Right lobe of liver (tissue), 6 donors: ENCODE measurements at regions of chr11 and their contacts with region 1.

Region 1: DNA sequence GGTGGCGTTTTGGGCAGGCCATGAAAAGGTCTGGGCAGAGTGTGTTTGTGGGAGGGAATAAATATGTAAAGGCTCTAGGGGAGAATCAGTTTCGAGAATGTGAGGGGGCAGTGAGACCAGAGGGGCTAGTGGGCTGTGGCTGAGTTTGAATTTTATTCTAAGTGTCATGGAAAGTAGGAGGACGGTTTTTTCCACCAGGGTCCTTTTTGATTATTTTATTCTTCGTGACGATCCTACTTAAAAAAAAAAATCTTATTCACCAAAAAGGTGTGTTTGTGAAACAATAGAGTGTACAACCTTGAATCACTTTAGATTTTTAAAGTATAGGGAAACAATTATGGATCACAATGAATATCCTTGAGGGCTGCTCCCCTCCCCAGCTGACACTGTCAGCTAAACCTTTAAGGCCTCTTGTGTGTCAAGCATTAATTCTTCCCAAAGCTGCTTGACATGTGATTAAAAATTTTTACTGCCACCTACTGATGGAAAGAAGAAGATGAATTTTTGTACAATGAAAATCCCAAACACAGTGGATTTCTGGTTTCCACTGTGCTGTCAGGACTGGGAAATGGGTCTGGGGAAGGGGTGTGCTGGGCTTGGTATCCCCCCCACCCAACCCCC is 107.5 kb upstream of the OR4B1 start:
- DNase-seq: peak in 1 of 3 donors; percentile 23
- ATAC-seq: peak; percentile 58 to 66 (median 62)
- H3K4me3 ChIP-seq: peak overlapping the region in 2 of 3 donors; percentile 8 to 27
- H3K27ac ChIP-seq: peak overlapping the region; percentile 39 to 58 (median 51)
- H3K4me1 ChIP-seq: peaks cover 0 to 60% (median 12%) of the 10 kb centered on the region in 4 donors
- H3K27me3 ChIP-seq: no peaks in the 10 kb centered on the region
- CTCF ChIP-seq: peak; percentile 37 to 44 (median 42)
- POLR2A ChIP-seq: no peak

Region 2: GRCh38 chr11:47886096-47886495 is 223.1 kb before region 1 on chr11:
- intact Hi-C with region 1: no loop called
- DNase-seq: peak in 1 of 3 donors; percentile 19
- ATAC-seq: peak in 2 of 4 donors; percentile 44 to 47
- H3K4me3 ChIP-seq: no peak overlapping the region
- H3K27ac ChIP-seq: no peak overlapping the region
- H3K4me1 ChIP-seq: no peaks in the 10 kb centered on the region
- H3K27me3 ChIP-seq: no peaks in the 10 kb centered on the region
- CTCF ChIP-seq: no peak
- POLR2A ChIP-seq: no peak

Region 3: GRCh38 chr11:47932544-47932943 is 176.6 kb before region 1 on chr11:
- intact Hi-C with region 1: loop called (anchors 5 kb)
- DNase-seq: no peak
- ATAC-seq: no peak
- H3K4me3 ChIP-seq: no peak overlapping the region
- H3K27ac ChIP-seq: no peak overlapping the region
- H3K4me1 ChIP-seq: peaks cover 0 to 4% (median 0%) of the 10 kb centered on the region in 4 donors
- H3K27me3 ChIP-seq: no peaks in the 10 kb centered on the region
- CTCF ChIP-seq: no peak
- POLR2A ChIP-seq: no peak

Region 4: DNA sequence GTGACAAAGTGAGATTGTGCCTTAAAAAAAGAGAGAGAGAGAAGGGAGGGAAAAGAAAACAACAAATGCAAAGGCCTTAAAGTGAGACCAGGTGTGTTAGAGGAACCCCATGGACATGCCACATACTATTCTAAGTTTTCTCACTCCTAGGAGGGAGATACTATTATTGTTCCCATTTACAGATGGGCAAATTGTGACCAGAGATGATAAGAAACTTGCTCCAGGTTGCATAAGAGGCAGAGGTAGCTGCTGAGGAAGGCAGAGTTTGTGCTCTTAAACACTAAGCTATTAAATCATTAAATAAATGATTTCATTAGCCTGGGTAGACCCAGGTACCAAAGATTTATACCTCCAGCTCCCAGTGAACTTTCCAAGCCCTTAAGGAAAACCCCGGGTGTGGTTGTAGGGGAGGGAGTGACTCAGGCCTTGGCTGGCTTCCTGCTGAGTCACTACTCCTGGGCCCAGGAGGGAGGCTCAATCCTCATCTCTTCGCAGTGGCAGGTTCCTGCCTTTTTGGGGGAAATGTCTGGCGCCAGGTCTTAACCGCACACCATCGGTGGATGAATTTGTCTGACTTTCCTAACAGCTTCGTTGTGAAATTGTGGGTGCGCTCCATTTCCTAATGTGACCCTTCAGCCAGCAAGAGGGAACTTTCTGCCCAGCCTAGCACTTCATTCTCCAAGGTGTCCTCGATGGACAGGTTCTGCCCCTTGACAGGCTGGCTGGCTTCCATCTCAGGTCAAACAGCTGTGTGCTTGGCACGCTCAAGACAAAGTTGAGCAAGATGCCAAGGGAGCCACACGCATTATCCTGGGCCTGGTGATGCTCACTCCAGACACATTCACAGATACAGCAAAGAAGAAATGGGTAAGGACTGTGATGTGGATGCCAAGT is 162.2 kb before region 1 on chr11:
- intact Hi-C with region 1: loop called in 1 of 2 experiments (anchors 5 kb)
- DNase-seq: peak; percentile 65 to 76 (median 69)
- ATAC-seq: peak; percentile 48 to 84 (median 65)
- H3K4me3 ChIP-seq: no peak overlapping the region
- H3K27ac ChIP-seq: peak overlapping the region in 1 of 3 donors; percentile 56
- H3K4me1 ChIP-seq: peaks cover 0 to 28% (median 4%) of the 10 kb centered on the region in 4 donors
- H3K27me3 ChIP-seq: no peaks in the 10 kb centered on the region
- CTCF ChIP-seq: no peak
- POLR2A ChIP-seq: no peak

Region 5: GRCh38 chr11:48073031-48073861 is 35.9 kb before region 1 on chr11:
- intact Hi-C with region 1: no loop called
- DNase-seq: no peak
- ATAC-seq: no peak
- H3K4me3 ChIP-seq: no peak overlapping the region
- H3K27ac ChIP-seq: no peak overlapping the region
- H3K4me1 ChIP-seq: peaks cover 0 to 17% (median 6%) of the 10 kb centered on the region in 4 donors
- H3K27me3 ChIP-seq: no peaks in the 10 kb centered on the region
- CTCF ChIP-seq: no peak
- POLR2A ChIP-seq: no peak